HCT116 (cell line): ENCODE measurements at regions of chr1 and their contacts with region 1.

Region 1: GRCh38 chr1:236759252-236759859 is 35.7 kb upstream of the MTR start:
- DNase-seq: peak; percentile 37
- ATAC-seq: peak; percentile 78
- H3K4me3 ChIP-seq: no peak overlapping the region
- H3K27ac ChIP-seq: no peak overlapping the region
- H3K4me1 ChIP-seq: no peaks in the 10 kb centered on the region
- H3K27me3 ChIP-seq: no peaks in the 10 kb centered on the region
- CTCF ChIP-seq: peak; percentile 41 to 81 (median 59); a peak in 5 of 6 replicates
- POLR2A ChIP-seq: no peak
- RAD21 ChIP-seq: peak; percentile 53

Region 2: DNA sequence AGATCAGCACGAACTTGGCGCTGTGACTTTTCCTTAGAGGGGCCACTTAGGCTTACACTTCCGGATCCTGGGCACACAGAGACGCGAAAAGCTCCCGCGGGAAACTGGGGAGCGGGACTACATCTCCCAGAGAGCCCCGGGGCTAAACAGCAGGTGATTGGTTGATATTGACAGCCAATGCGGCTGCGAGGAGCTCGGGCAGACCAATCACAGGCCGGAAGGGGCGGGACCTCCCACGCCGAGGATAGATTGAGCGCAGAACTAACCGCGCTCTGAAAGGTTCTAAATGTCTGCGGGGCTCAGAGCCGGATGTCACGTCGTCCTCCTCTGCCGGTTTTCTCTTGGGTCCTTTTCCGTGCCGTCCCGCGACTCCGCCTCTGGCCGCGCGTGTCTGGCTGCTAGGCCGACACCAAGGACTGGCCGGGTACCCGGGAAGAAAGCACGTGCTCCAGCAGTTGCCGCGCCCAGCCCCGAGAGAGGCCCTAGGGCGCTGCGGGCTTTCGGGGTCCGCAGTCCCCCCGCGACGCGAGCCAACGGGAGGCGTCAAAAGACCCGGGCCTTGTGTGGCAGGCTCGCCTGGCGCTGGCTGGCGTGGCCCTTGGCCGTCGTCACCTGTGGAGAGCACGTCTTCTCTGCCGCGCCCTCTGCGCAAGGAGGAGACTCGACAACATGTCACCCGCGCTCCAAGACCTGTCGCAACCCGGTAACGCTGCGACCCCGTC is 35.8 kb after region 1 on chr1 and contains the start of gene MTR:
- CTCF ChIA-PET with region 1: interaction called, 12 read pairs
- POLR2A ChIA-PET with region 1: interaction called, 3 read pairs
- RAD21 ChIA-PET with region 1: no interaction called
- intact Hi-C with region 1: no loop called
- DNase-seq: peak; percentile 97
- ATAC-seq: peak; percentile 98
- H3K4me3 ChIP-seq: peak within 1 kb of the TSS; percentile 86 to 88
- H3K27ac ChIP-seq: peak within 1 kb of the TSS; percentile 88
- H3K4me1 ChIP-seq: peaks cover 6 to 13% of the 10 kb centered on the region in 2 experiments
- H3K27me3 ChIP-seq: no peaks in the 10 kb centered on the region
- CTCF ChIP-seq: no peak
- POLR2A ChIP-seq: peak; percentile 92
- RAD21 ChIP-seq: no peak
- total RNA-seq, gene MTR: 24.6 TPM

Region 3: DNA sequence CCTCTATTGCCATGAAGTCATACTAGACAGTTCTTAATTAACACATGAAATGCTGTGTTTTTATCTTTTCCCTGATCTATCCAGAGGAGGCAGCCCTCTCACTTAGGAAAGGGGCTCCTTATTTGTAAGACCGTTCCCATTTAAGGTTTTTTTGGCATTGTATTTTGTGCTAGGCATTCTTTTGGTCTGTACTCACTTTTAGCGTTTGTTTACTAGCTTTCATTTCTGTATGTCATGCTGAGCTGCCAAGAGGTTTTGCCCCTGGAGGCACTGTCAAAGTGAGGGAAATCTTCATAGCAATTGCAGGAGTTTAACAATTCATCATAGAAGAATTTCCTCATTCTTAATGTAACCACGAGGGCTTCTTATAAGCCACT is 95.2 kb after region 1 on chr1:
- CTCF ChIA-PET with region 1: no interaction called
- POLR2A ChIA-PET with region 1: no interaction called
- RAD21 ChIA-PET with region 1: no interaction called
- intact Hi-C with region 1: no loop called
- DNase-seq: no peak
- ATAC-seq: no peak
- H3K4me3 ChIP-seq: no peak overlapping the region
- H3K27ac ChIP-seq: no peak overlapping the region
- H3K4me1 ChIP-seq: 0 out of 4 replicates have a peak, but pooled peaks cover 0 to 3% of the 10 kb centered on the region in 2 experiments
- H3K27me3 ChIP-seq: no peaks in the 10 kb centered on the region
- CTCF ChIP-seq: no peak
- POLR2A ChIP-seq: no peak
- RAD21 ChIP-seq: no peak

Region 4: DNA sequence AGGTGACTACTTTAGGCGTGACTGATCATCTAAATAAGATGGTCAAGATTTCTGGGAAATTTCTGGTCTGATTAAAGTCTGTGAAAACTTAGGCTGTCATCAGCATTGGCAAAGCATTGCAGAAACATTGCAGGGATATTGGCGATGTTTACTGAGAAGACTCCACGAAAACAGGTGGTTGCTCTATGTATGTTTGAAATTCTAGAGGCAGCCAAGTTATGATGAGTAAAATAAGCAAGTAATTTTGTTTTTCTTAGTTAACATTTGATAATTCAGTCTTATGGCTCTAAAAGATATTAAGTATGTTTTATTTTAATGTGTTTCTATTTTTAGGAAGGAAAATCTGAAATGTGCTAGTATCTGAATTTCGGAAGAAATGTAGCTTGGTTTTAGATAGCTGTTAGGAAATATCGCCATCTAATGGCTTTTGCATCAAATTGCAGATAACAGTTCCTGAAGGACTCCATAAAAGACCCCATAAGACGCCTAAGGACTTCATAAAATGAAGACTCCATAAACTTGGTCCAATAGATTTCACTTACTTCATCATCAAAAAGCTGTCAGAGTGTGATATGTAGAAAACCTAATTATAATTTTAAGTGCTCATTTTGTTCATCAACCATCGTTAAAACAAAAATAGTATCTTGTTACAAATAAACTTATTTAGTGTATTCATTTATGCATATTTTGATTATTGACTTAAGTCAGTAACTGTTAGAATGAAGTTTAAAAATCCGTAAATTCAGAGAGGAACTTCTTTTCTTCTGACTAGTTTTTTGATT is 627.2 kb after region 1 on chr1:
- CTCF ChIA-PET with region 1: interaction called, 10 read pairs
- POLR2A ChIA-PET with region 1: no interaction called
- RAD21 ChIA-PET with region 1: no interaction called
- intact Hi-C with region 1: loop called (anchors 2 kb)
- DNase-seq: peak; percentile 7
- ATAC-seq: no peak; the same call in 1 of the 2 replicates
- H3K4me3 ChIP-seq: no peak overlapping the region
- H3K27ac ChIP-seq: no peak overlapping the region
- H3K4me1 ChIP-seq: no peaks in the 10 kb centered on the region
- H3K27me3 ChIP-seq: no peaks in the 10 kb centered on the region
- CTCF ChIP-seq: peak; percentile 30 to 67 (median 48); a peak in 5 of 6 replicates
- POLR2A ChIP-seq: no peak
- RAD21 ChIP-seq: peak; percentile 64

Region 5: DNA sequence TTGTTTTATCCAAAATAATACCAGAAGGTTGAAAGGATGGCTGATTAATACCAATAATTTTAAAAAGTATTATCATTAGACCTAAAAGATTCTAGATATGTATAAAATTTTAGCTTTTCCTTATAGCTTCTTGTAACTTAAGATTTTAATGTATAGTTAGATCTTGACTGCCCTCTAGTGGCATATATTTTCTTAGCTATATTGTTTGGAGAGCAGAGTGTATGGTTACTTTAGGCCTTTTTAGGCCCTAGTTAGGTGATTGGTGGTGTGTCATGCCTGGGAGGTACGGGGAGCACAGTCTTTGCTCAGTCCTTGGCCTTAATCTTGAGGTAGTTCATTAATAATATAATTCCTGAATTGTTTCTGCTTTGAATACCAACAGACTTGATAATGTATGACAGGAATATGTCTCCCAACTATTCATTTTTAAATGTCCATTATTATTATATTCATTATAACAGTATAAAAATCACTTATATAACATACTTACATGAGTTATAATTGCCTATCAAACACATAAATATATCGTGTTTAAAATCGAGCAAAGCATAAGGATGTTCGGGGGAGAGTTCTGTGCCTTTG is 803.0 kb after region 1 on chr1:
- CTCF ChIA-PET with region 1: interaction called, 22 read pairs
- POLR2A ChIA-PET with region 1: no interaction called
- RAD21 ChIA-PET with region 1: no interaction called
- intact Hi-C with region 1: loop called (anchors 5 kb)
- DNase-seq: no peak
- ATAC-seq: peak; percentile 67
- H3K4me3 ChIP-seq: no peak overlapping the region
- H3K27ac ChIP-seq: no peak overlapping the region
- H3K4me1 ChIP-seq: no peaks in the 10 kb centered on the region
- H3K27me3 ChIP-seq: no peaks in the 10 kb centered on the region
- CTCF ChIP-seq: peak; percentile 23 to 62 (median 39); a peak in 5 of 6 replicates
- POLR2A ChIP-seq: no peak
- RAD21 ChIP-seq: peak; percentile 47